Left cardiac atrium (tissue), 4 donors: ENCODE measurements at regions of chr2 and their contacts with region 1.

Region 1: GRCh38 chr2:136538489-136538888 is 226.9 kb upstream of the THSD7B start:
- DNase-seq: peak; percentile 37
- ATAC-seq: peak; percentile 70 to 90

Region 2: DNA sequence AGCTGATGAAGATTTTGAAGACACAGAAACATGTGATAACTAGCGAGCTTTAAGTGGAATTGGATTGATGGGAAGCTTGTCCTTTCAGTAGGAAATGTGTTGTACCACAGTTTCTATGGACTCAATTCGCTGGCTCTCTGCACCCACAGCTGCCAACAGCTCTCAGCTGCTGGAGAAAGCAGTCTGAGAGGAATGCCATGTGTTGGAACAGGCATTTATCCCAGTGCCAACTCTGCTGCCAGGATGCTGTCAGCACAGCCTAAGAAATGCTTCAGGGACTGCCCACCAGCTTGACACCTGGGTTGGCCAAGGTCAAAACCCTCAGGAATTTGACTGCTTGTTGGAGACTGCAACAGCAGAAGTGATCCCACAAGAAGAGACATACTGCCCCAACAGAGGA is 33.8 kb after region 1 on chr2:
- intact Hi-C with region 1: loop called in 1 of 2 experiments (anchors 5 kb)
- DNase-seq: peak; percentile 68
- ATAC-seq: peak; percentile 99